PC-3 (cell line): ENCODE measurements at regions of chr19 and their contacts with region 1.

Region 1: GRCh38 chr19:17305517-17306284 is at the start of gene MRPL34:
- DNase-seq: peak; percentile 99
- ATAC-seq: peak; percentile 63
- H3K4me3 ChIP-seq: peak within 1 kb of the TSS; percentile 89
- H3K27ac ChIP-seq: peak within 1 kb of the TSS; percentile 74
- H3K4me1 ChIP-seq: peaks cover 29% of the 10 kb centered on the region
- H3K27me3 ChIP-seq: no peaks in the 10 kb centered on the region
- CTCF ChIP-seq: peak; percentile 85
- total RNA-seq, gene MRPL34: 191 and 206 TPM in 2 replicates

Region 2: DNA sequence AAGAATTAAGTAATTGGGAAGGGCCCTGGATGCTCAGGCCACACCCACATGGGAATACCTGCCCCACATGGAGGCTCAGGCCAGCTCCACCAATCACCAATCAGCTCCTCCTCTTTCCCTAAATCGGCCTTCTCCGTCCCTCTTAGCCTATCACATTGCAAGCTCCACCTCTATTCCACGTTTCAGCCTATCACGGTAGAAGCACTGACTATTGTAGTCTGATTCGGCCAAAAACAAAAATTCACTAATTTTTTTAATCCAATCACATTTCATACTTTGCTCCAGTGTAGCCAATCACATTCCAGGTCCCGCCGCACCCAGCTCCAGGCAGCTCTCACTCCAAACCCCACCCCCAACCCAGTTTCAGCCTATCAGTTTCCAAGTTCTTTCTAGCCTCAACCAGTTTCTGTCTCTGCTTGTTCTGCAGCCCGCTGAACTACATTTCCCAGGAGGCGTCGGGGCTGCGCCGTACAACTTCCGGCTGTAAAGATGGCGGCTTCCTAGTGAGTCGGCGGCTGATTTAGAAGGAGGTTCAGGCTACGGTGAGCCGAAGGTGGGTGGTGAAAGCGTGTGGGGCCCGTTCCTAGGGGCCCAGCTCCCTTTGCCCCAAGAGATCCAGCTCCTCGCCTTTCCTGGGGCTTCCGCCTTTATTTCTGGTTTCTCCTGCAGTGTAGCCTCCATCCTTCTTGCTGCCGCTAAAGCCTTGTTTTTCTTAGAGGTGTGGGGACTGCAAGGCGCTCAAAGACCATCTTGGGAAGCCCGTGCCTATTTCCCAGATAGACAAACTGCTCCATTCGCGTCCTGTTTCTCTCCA is 38.5 kb before region 1 on chr19 and contains the start of gene BABAM1:
- CTCF ChIA-PET with region 1: interaction called, 6 read pairs
- POLR2A ChIA-PET with region 1: no interaction called
- intact Hi-C with region 1: loop called (anchors 2 kb)
- DNase-seq: peak; percentile 99
- ATAC-seq: peak; percentile 97
- H3K4me3 ChIP-seq: peak within 1 kb of the TSS; percentile 97
- H3K27ac ChIP-seq: peak within 1 kb of the TSS; percentile 42
- H3K4me1 ChIP-seq: peaks cover 7% of the 10 kb centered on the region
- H3K27me3 ChIP-seq: no peaks in the 10 kb centered on the region
- CTCF ChIP-seq: no peak
- total RNA-seq, gene BABAM1: 196 and 214 TPM in 2 replicates

Region 3: DNA sequence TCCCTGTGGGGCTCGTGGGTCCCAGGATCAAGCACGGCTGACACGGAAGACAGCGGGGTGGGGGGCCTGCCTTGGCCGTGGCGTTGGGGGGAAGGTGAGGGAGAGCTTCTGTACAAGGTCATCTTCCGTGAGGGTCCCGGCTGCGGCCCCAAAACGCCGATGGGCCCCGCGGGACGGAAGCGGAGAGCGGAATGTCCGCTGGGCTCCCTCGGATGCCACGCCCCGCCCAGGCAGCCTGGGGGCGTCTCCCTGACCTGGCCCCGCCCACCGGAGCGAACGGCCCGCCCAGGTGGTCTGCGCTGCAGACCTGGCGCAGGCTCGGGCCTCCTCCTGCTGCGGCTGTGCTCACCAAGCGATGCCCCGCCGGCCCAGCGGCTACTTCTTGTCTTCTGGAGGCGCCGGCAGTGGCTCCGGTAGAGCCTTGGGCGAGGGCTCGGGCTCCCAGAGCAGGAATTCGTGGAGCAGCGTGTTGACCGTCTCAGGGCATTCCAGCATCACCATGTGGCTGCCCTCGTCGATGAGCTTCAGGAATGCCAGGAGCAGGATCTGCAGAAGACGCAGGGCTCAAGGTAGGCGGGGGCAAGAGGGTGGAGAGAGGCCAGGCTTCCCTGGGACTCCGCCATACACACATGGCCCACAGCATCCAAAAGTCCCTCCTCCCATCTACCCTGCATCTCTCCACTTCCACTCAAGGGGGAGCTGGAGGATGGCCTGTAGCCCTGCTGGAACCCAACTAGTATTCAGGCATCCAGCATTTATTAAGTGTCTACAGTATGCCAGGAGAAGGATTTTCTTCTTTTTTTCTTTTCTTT is 13.2 kb before region 1 on chr19:
- CTCF ChIA-PET with region 1: interaction called, 8 read pairs
- POLR2A ChIA-PET with region 1: no interaction called
- intact Hi-C with region 1: loop called (anchors 1 kb)
- DNase-seq: peak; percentile 72
- ATAC-seq: peak; percentile 61
- H3K4me3 ChIP-seq: no peak overlapping the region
- H3K27ac ChIP-seq: no peak overlapping the region
- H3K4me1 ChIP-seq: peaks cover 18% of the 10 kb centered on the region
- H3K27me3 ChIP-seq: no peaks in the 10 kb centered on the region
- CTCF ChIP-seq: peak; percentile 56; the same call in 1 of the 2 replicates

Region 4: DNA sequence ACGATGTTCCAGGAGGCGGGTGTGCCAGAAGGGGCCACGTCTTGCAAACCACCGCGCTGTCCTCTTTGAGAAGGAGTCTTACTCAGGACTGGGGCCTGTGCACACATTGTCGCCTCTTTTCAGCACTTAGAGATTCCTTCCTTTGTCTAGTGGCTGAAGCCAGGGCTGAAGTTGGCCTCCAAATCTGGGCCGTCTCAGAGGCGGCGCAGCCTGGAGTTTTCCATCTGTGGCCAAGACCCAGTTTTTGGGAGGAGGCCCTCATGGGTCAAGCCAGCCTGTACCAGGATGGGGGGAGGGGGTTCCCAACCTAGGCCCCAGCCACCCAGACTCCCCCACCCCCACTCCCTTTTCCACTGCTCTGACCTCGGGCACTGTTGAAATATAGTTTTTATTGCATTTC is 17.2 kb after region 1 on chr19:
- CTCF ChIA-PET with region 1: no interaction called
- POLR2A ChIA-PET with region 1: interaction called, 15 read pairs
- intact Hi-C with region 1: no loop called
- DNase-seq: no peak
- ATAC-seq: peak; percentile 16
- H3K4me3 ChIP-seq: no peak overlapping the region
- H3K27ac ChIP-seq: no peak overlapping the region
- H3K4me1 ChIP-seq: peaks cover 1% of the 10 kb centered on the region
- H3K27me3 ChIP-seq: no peaks in the 10 kb centered on the region
- CTCF ChIP-seq: no peak

Region 5: GRCh38 chr19:17336872-17337722 is 31.4 kb after region 1 on chr19 and contains the start of gene GTPBP3:
- CTCF ChIA-PET with region 1: interaction called, 3 read pairs
- POLR2A ChIA-PET with region 1: interaction called, 11 read pairs
- intact Hi-C with region 1: loop called (anchors 1 kb)
- DNase-seq: peak; percentile 99
- ATAC-seq: peak; percentile 73
- H3K4me3 ChIP-seq: peak within 1 kb of the TSS; percentile 86
- H3K27ac ChIP-seq: peak within 1 kb of the TSS; percentile 70
- H3K4me1 ChIP-seq: peaks cover 18% of the 10 kb centered on the region
- H3K27me3 ChIP-seq: no peaks in the 10 kb centered on the region
- CTCF ChIP-seq: no peak
- total RNA-seq, gene GTPBP3: 86.0 and 109 TPM in 2 replicates

Region 6: GRCh38 chr19:17419621-17420466 is 114.1 kb after region 1 on chr19 and contains the start of gene MVB12A:
- CTCF ChIA-PET with region 1: no interaction called
- POLR2A ChIA-PET with region 1: no interaction called
- intact Hi-C with region 1: no loop called
- DNase-seq: peak; percentile 99
- ATAC-seq: peak; percentile 93
- H3K4me3 ChIP-seq: peak within 1 kb of the TSS; percentile 88
- H3K27ac ChIP-seq: peak within 1 kb of the TSS; percentile 34
- H3K4me1 ChIP-seq: peaks cover 16% of the 10 kb centered on the region; the same call in 1 of the 2 replicates
- H3K27me3 ChIP-seq: no peaks in the 10 kb centered on the region
- CTCF ChIP-seq: no peak
- total RNA-seq, gene MVB12A: 82.5 and 103 TPM in 2 replicates